MCF 10A (cell line): ENCODE measurements at regions of chr6 and their contacts with region 1.

Region 1: GRCh38 chr6:137944793-137945498 is 77.9 kb downstream of the TNFAIP3 start:
- DNase-seq: peak; percentile 55
- H3K4me3 Mint-ChIP-seq: no peak overlapping the region
- H3K27ac Mint-ChIP-seq: peak overlapping the region; percentile 82
- H3K4me1 Mint-ChIP-seq: peaks cover 19% of the 10 kb centered on the region
- H3K27me3 Mint-ChIP-seq: no peaks in the 10 kb centered on the region
- CTCF ChIP-seq: peak; percentile 72

Region 2: DNA sequence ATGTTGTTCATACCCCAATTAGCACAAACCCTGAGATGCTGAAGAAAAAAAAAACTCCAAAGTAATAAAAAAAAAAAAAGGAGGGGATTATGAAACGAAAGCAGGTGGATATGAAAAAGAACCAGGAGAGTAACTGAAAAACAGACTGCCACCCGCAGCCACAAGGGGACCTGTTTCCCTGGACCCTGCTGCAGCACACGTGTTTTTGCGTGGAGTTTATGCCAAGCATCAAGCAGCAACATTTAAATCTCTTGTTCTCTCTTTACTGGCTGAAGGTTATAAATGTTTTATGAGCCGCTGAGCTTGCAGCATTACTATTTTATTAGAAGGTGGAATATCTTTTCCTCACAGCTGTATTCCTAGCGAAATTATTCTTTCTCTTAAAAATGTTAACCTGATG is 319.1 kb before region 1 on chr6:
- CTCF ChIA-PET with region 1: no interaction called
- POLR2A ChIA-PET with region 1: no interaction called
- intact Hi-C with region 1: no loop called
- DNase-seq: no peak
- H3K4me3 Mint-ChIP-seq: no peak overlapping the region
- H3K27ac Mint-ChIP-seq: no peak overlapping the region
- H3K4me1 Mint-ChIP-seq: no peaks in the 10 kb centered on the region
- H3K27me3 Mint-ChIP-seq: peaks cover 16% of the 10 kb centered on the region
- CTCF ChIP-seq: no peak

Region 3: DNA sequence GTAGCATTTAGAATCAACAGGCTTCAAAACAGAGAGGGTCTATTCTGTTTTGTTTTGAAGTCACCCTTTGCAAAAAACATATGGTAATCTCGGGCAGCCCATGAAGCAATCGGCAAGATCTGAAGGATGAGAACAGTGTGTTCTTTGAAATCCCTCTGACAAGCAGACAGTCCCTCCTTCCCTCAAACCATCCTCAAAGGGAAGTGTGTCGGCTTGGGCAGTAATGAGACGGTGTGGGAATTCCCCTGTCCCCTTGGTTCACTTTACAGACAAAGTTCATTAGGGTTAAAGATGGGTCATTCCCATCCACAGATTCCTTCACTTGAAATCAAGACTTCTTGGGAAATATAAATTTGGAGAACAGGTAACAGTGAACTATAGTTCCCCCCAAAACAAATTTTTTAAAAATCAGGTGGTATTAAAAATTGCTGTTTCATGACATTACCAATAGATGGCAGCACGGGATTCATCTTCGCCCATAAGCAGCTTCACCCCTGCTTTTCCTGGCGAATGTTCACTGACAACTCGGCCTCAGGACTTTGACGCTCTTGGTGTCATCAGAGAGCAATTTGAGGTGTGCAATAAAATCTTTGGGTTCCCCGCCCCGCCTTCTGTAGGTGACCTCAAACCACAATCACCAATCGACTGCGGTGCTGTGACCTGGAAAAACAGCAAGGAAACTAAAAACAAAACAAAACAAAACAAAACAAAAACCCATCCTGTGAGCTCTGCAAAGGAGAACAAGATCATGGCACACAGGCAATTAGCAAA is 237.2 kb before region 1 on chr6:
- CTCF ChIA-PET with region 1: interaction called, 76 read pairs
- POLR2A ChIA-PET with region 1: interaction called, 5 read pairs
- intact Hi-C with region 1: loop called (anchors 1 kb)
- DNase-seq: peak; percentile 88
- H3K4me3 Mint-ChIP-seq: peak overlapping the region; percentile 60
- H3K27ac Mint-ChIP-seq: peak overlapping the region; percentile 67
- H3K4me1 Mint-ChIP-seq: peaks cover 14% of the 10 kb centered on the region
- H3K27me3 Mint-ChIP-seq: no peaks in the 10 kb centered on the region
- CTCF ChIP-seq: peak; percentile 64

Region 4: GRCh38 chr6:137926207-137926731 is 18.7 kb before region 1 on chr6:
- CTCF ChIA-PET with region 1: interaction called, 10 read pairs
- POLR2A ChIA-PET with region 1: interaction called, 4 read pairs
- intact Hi-C with region 1: no loop called
- DNase-seq: peak; percentile 58
- H3K4me3 Mint-ChIP-seq: no peak overlapping the region
- H3K27ac Mint-ChIP-seq: peak overlapping the region; percentile 23
- H3K4me1 Mint-ChIP-seq: peaks cover 12% of the 10 kb centered on the region
- H3K27me3 Mint-ChIP-seq: no peaks in the 10 kb centered on the region
- CTCF ChIP-seq: no peak

Region 5: DNA sequence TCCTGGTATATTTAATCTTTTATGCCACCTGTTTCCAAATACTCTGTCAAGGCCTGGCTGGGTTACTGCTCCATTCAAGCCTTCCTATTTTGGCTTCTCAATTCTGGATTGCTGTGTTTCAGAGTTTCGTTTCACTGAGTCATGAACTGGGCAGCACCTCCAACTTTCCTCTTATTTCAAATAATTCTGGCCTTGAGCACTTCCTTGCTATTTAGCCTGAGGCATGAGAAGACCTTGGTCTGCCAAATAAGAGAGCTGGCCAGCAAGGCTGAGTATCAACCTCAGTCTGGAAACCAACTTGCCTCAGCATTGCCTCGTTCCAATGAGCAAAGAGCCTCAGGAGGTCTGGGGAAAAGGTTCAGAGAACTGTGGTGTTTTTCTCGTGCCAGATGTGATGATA is 11.2 kb before region 1 on chr6:
- CTCF ChIA-PET with region 1: interaction called, 37 read pairs
- POLR2A ChIA-PET with region 1: interaction called, 5 read pairs
- intact Hi-C with region 1: no loop called
- DNase-seq: peak; percentile 72
- H3K4me3 Mint-ChIP-seq: no peak overlapping the region
- H3K27ac Mint-ChIP-seq: peak overlapping the region; percentile 79
- H3K4me1 Mint-ChIP-seq: peaks cover 11% of the 10 kb centered on the region
- H3K27me3 Mint-ChIP-seq: no peaks in the 10 kb centered on the region
- CTCF ChIP-seq: no peak

Region 6: DNA sequence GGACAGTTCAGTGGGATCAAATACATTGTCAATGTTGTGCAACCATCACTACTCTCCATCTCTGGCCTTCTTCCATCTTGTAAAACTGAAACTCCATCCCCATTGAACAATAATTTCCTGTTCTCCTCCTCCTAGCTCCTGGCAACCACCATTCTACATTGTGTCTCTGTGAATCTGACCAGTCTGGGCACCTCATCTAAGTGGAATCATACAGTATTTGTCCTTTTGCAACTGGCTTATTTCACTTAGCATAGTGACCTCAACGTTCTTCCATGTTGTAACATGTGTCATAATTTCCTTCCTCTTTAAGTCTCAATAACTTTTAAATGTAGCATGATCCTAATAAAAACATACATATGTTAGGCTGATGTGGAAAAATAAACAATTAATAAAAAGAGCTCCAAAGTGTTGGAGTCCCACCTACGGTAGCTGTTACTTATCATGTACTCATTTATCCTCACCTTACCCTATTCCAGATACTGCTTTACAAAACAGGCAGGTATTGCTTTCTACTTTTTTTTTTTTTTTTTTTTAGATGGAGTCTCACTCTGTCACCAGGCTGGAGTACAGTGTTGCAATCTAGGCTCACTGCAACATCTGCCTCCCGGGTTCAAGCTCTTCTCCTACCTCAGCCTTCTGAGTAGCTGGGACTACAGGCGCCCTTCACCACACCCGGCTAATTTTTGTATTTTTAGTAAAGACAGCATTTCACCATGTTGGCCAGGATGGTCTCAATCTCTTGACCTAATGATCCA is 14.0 kb after region 1 on chr6:
- CTCF ChIA-PET with region 1: interaction called, 14 read pairs
- POLR2A ChIA-PET with region 1: interaction called, 4 read pairs
- intact Hi-C with region 1: no loop called
- DNase-seq: no peak
- H3K4me3 Mint-ChIP-seq: no peak overlapping the region
- H3K27ac Mint-ChIP-seq: no peak overlapping the region
- H3K4me1 Mint-ChIP-seq: no peaks in the 10 kb centered on the region
- H3K27me3 Mint-ChIP-seq: no peaks in the 10 kb centered on the region
- CTCF ChIP-seq: no peak

Region 7: GRCh38 chr6:137975188-137975940 is 30.4 kb after region 1 on chr6:
- CTCF ChIA-PET with region 1: interaction called, 12 read pairs
- POLR2A ChIA-PET with region 1: interaction called, 3 read pairs
- intact Hi-C with region 1: no loop called
- DNase-seq: peak; percentile 29
- H3K4me3 Mint-ChIP-seq: no peak overlapping the region
- H3K27ac Mint-ChIP-seq: no peak overlapping the region
- H3K4me1 Mint-ChIP-seq: peaks cover 11% of the 10 kb centered on the region
- H3K27me3 Mint-ChIP-seq: no peaks in the 10 kb centered on the region
- CTCF ChIP-seq: peak; percentile 53